Heart left ventricle (tissue), 16 donors: ENCODE measurements at regions of chr9 and their contacts with region 1.

Region 1: DNA sequence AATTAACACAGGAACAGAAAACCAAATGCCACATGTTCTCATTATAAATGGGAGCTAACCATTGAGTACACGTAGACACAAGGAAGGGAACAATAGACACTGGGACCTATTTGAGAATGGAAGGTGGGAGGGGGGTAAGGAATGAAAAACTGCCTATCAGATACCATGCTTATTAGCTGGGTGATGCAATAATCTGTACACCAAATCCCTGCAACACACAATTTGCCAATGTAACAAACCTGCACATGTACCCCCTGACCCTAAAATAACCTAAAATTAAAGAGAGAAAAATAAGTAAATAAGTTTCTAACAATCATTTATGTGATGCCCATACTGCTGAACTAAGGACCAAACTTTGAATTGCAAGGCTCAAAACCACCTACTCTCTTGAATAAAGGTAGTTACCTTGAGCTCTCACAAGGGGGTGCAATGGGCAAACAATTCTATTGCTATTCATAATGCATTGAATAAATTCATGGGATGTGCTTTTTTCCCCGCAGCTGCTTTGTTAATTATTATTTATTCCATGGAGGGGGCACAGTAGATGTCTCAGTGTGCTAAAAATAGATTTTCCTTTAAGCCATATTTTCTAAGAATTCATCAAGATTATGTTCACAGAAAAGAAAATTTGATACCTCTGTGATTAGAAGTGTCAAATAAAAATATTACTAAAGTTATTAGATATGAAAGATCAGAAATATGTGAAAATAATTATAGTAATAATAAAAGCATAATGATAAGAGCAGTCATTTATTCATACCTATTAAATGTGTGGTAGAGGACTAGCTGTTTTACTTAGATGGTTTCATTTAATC is 76.2 kb upstream of the PTPN3 start:
- DNase-seq: peak in 2 of 5 donors; percentile 29 to 51
- ATAC-seq: peak; percentile 71 to 81 (median 74)
- H3K4me3 ChIP-seq: no peak overlapping the region
- H3K27ac ChIP-seq: no peak overlapping the region
- H3K4me1 ChIP-seq: peaks cover 0 to 4% (median 0%) of the 10 kb centered on the region in 12 donors
- H3K27me3 ChIP-seq: no peaks in the 10 kb centered on the region
- CTCF ChIP-seq: peak; percentile 48 to 80 (median 70)
- POLR2A ChIP-seq: no peak

Region 2: GRCh38 chr9:109311731-109312130 is 262.5 kb before region 1 on chr9:
- intact Hi-C with region 1: no loop called
- DNase-seq: no peak
- ATAC-seq: no peak
- H3K4me3 ChIP-seq: no peak overlapping the region
- H3K27ac ChIP-seq: no peak overlapping the region
- H3K4me1 ChIP-seq: peaks cover 0 to 63% (median 12%) of the 10 kb centered on the region in 12 donors
- H3K27me3 ChIP-seq: peaks cover 0 to 6% (median 0%) of the 10 kb centered on the region in 9 donors
- CTCF ChIP-seq: no peak
- POLR2A ChIP-seq: no peak

Region 3: GRCh38 chr9:109619310-109619709 is 45.0 kb after region 1 on chr9:
- intact Hi-C with region 1: no loop called
- DNase-seq: no peak
- ATAC-seq: no peak
- H3K4me3 ChIP-seq: no peak overlapping the region
- H3K27ac ChIP-seq: no peak overlapping the region
- H3K4me1 ChIP-seq: peaks cover 0 to 4% (median 0%) of the 10 kb centered on the region in 12 donors
- H3K27me3 ChIP-seq: peaks cover 0 to 2% (median 0%) of the 10 kb centered on the region in 9 donors
- CTCF ChIP-seq: no peak
- POLR2A ChIP-seq: no peak

Region 4: GRCh38 chr9:109652964-109653363 is 78.7 kb after region 1 on chr9:
- intact Hi-C with region 1: loop called (anchors 1 to 5 kb)
- DNase-seq: peak in 2 of 5 donors; percentile 21 to 22
- ATAC-seq: peak; percentile 72 to 86 (median 78)
- H3K4me3 ChIP-seq: no peak overlapping the region
- H3K27ac ChIP-seq: no peak overlapping the region
- H3K4me1 ChIP-seq: peaks cover 0 to 4% (median 0%) of the 10 kb centered on the region in 12 donors
- H3K27me3 ChIP-seq: no peaks in the 10 kb centered on the region
- CTCF ChIP-seq: peak in 11 of 12 donors; percentile 24 to 65 (median 50)
- POLR2A ChIP-seq: no peak

Region 5: GRCh38 chr9:109817846-109818472 is 243.7 kb after region 1 on chr9:
- intact Hi-C with region 1: loop called in 9 of 10 experiments (anchors 2 to 10 kb)
- DNase-seq: peak in 4 of 5 donors; percentile 71 to 86 (median 80)
- ATAC-seq: peak; percentile 74 to 82 (median 78)
- H3K4me3 ChIP-seq: peak overlapping the region in 4 of 12 donors; percentile 14 to 20 (median 20)
- H3K27ac ChIP-seq: peak overlapping the region in 11 of 12 donors; percentile 15 to 81 (median 70)
- H3K4me1 ChIP-seq: peaks cover 0 to 41% (median 21%) of the 10 kb centered on the region in 12 donors
- H3K27me3 ChIP-seq: no peaks in the 10 kb centered on the region
- CTCF ChIP-seq: peak; percentile 78 to 92 (median 82)
- POLR2A ChIP-seq: no peak

Region 6: DNA sequence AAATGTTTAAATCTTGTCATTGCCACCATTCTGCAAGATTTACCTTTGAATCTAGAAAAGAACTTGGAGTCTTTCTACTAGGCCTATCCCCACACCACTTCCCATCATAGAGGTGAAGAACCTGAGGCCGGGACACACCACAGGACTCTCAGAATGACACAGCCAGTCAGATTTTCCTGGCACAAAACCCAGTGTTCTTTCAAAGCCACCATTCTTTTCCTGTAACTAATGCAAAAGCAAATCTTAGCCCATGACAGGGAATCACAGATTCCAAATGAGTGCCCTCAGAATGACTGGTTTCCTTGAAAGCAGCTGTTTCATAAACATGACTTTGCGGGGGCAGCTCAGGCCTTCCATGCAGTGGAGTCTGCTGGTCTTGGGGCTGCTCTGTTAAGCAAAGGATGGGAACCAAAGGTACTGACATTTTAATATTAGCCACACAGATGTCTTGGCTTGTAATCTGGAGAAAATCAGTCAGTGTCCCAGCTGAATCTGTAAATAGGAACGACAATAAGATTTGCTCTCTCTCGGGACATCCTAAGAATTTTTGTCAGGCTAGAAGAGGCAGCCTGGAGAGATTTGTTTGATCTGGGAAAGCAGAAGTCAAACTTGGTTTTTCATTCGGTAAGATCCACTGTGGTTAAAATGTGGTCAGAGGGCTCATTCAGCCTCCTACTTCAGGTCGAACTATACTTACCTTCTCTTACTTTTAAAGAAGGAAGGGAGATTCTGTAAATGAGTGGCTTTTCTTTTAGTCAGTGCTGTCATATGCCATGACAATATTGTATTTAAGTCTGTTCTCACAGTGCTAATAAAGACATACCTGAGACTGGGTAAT is 320.9 kb after region 1 on chr9:
- intact Hi-C with region 1: loop called in 4 of 10 experiments (anchors 10 kb)
- DNase-seq: peak in 4 of 5 donors; percentile 32 to 61 (median 37)
- ATAC-seq: peak; percentile 30 to 82 (median 64)
- H3K4me3 ChIP-seq: no peak overlapping the region
- H3K27ac ChIP-seq: peak overlapping the region in 10 of 12 donors; percentile 16 to 61 (median 44)
- H3K4me1 ChIP-seq: peaks cover 0 to 41% (median 8%) of the 10 kb centered on the region in 12 donors
- H3K27me3 ChIP-seq: no peaks in the 10 kb centered on the region
- CTCF ChIP-seq: no peak
- POLR2A ChIP-seq: no peak

Region 7: DNA sequence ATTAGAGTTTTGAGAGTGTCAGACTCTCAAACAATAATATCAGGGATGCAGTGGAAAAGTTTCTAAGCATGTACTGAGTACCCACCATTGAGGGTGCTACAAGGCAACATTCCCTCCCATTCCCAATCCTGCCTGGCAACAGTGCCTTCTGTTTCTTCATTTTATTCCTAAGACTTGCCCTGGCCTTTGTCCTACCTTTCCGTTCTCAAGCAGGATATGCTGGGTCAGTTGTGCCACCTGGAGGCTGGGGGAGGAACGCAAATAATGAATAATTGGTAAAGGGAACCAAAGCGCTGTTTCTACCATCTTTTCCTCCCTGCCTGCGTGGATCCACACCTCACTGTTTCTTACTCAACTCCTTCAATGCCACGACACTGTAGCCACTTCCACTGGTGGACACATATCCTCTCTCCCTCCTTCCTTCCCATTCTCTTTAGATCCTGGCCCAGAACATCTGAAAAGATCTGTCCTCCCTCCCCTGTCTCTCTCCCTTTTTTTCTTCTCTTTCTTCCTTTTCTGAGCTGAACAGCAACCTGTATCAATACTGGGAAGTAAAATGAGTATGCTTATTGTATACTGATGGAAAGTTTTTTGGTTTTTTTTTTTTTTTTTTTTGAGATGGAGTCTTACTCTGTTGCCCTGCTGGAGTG is 484.2 kb after region 1 on chr9:
- intact Hi-C with region 1: loop called in 2 of 10 experiments (anchors 10 kb)
- DNase-seq: peak in 1 of 5 donors; percentile 44
- ATAC-seq: peak; percentile 48 to 68 (median 62)
- H3K4me3 ChIP-seq: no peak overlapping the region
- H3K27ac ChIP-seq: peak overlapping the region in 8 of 12 donors; percentile 0 to 55 (median 9)
- H3K4me1 ChIP-seq: peaks cover 0 to 45% (median 36%) of the 10 kb centered on the region in 12 donors
- H3K27me3 ChIP-seq: no peaks in the 10 kb centered on the region
- CTCF ChIP-seq: peak; percentile 28 to 66 (median 48)
- POLR2A ChIP-seq: no peak

Region 8: DNA sequence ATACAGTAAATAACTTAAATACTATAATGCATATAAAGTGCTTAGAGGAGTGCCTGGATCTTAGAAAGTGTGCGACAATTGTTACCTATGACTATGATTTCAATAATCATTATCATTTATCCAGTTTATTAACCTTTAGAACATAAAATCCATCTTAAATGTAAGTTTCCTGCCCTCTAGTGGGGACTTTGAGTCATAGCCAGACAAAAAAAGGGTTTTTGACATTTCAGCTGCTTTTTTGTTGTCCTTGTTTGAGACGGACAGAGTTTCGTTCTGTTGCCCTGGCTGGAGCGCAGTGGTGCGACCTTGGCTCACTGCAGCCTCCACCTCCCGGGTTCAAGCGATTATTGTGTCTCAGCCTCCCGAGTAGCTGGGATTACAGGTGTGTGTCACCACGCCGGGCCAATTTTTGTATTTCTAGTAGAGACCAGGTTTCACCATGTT is 643.4 kb after region 1 on chr9:
- intact Hi-C with region 1: loop called in 8 of 10 experiments (anchors 5 to 10 kb)
- DNase-seq: no peak
- ATAC-seq: no peak
- H3K4me3 ChIP-seq: no peak overlapping the region
- H3K27ac ChIP-seq: no peak overlapping the region
- H3K4me1 ChIP-seq: peaks cover 0 to 5% (median 0%) of the 10 kb centered on the region in 12 donors
- H3K27me3 ChIP-seq: no peaks in the 10 kb centered on the region
- CTCF ChIP-seq: peak; percentile 73 to 90 (median 81)
- POLR2A ChIP-seq: no peak